ENCODE measurements at regions of chr6 and their contacts with region 1.

Region 1: GRCh38 chr6:68689910-68690309 is 54.8 kb downstream of the ADGRB3 start:
- DNase-seq: no peak
- ATAC-seq: no peak
- H3K4me3 ChIP-seq: no peak overlapping the region
- H3K27ac ChIP-seq: no peak overlapping the region
- H3K4me1 ChIP-seq: no peaks in the 10 kb centered on the region
- H3K27me3 ChIP-seq: no peaks in the 10 kb centered on the region
- CTCF ChIP-seq: no peak

Region 2: GRCh38 chr6:68458447-68458846 is 231.5 kb before region 1 on chr6:
- intact Hi-C with region 1: no loop called
- DNase-seq: no peak
- ATAC-seq: no peak
- H3K4me3 ChIP-seq: no peak overlapping the region
- H3K27ac ChIP-seq: no peak overlapping the region
- H3K4me1 ChIP-seq: no peaks in the 10 kb centered on the region
- H3K27me3 ChIP-seq: no peaks in the 10 kb centered on the region
- CTCF ChIP-seq: no peak

Region 3: DNA sequence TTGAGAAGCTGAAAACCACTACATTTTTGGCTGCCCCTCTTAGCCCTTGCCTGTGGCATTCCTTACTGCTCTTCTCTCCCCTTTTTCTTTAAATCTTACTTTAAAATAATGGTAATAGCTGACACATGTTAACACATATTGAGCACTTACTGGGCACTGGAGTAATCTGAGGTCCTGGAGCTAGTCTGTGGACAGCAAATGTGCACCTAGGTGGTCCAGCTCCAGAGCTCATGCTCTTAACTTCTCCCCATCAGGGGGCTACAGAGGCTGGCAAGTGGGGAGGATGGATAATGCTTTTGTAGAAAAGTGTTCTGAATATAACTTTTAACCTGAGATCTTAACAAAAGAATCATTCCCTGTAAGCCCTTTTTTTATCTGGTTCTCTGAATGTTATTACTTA is 20.0 kb after region 1 on chr6:
- intact Hi-C with region 1: loop called in 1 of 2 experiments (anchors 1 kb)
- DNase-seq: no peak
- ATAC-seq: no peak
- H3K4me3 ChIP-seq: no peak overlapping the region
- H3K27ac ChIP-seq: no peak overlapping the region
- H3K4me1 ChIP-seq: no peaks in the 10 kb centered on the region
- H3K27me3 ChIP-seq: no peaks in the 10 kb centered on the region
- CTCF ChIP-seq: no peak

Measured in psoas muscle (tissue), 8 donors.